Cardiac septum (tissue), 1 donor: ENCODE measurements at regions of chr3 and their contacts with region 1.

Region 1: DNA sequence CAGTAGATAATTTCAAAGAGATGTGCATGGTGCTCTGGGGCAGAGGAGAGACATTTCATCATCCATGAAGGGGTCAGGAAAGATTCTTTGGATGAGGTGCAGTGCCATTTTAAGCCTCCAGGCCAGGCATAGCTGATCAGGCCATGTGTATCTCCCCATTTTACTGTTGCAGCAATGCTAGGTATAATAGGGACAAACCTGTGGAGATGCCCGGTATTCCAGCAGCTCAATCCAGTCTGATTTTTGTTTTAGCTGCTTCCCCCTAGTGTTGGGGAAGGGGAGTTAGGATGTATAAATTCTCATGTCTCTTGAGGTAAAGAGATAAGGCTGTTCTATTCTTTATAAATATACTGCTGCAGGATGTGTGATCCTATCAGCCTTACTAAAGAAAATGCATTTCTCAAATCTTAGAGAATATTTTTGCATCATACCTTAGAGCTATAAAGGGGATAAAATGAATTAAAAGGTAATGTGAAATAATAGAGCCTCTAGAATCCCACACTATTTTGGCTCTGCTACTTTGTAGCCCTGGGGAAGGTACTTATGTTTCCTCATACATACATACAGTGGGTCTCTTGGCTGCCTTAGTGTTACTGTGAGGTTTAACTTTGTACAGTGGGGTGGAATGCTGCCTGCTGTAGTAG is 5.2 kb downstream of the CDV3 start:
- DNase-seq: no peak

Region 2: GRCh38 chr3:133487920-133488540 is 90.6 kb before region 1 on chr3:
- intact Hi-C with region 1: loop called (anchors 5 kb)
- DNase-seq: no peak

Region 3: GRCh38 chr3:133887803-133888559 is 309.3 kb after region 1 on chr3:
- intact Hi-C with region 1: no loop called
- DNase-seq: peak; percentile 70